Naive thymus-derived CD4-positive, alpha-beta T cell (primary cell): ENCODE measurements at regions of chr11 and their contacts with region 1.

Region 1: DNA sequence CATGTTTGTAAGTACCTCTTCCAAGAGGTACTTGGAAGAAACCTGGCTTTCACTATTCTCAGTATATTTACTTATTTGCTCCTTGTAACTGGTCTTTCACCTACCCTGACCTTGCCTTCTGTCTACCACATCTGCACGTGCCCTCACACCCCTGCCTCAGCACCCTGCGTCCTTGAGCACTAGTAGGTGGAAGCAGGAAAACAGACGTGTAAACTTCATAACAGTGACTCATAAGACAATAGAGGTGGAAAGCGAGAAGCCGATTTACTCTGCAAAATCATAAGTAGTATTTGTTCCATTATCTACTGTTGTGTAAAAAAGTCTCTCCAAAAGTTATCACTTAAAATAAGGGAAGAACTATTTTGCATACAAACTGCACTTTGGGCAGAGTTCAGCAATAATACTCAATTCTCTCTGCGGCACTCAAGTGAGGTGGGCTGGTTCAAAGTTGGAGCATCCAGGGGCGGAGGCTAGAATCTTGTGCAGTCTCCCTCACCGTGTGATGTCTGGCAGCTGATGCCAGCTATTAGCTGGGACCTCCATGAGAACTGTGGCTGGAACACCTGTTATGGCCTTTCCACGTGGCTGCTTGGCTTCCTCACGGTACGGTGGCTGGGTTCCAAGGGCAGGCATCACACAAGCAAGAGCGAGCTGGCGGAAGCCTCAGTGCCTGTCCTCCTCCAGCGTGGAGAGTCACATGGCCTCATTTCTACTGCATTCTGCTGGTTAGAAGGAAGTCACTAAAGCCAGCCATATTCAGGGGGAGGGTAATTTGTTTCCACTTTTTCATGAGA is 30.4 kb downstream of the PACS1 start:
- DNase-seq: peak; percentile 29 to 83 (median 80)
- ATAC-seq: peak; percentile 98
- H3K4me3 ChIP-seq: peak overlapping the region; percentile 55
- H3K4me3 Mint-ChIP-seq: peak overlapping the region; percentile 79 to 96 (median 86)
- H3K27ac ChIP-seq: peak overlapping the region; percentile 69
- H3K27ac Mint-ChIP-seq: peak overlapping the region; percentile 85 to 99 (median 94)
- H3K4me1 ChIP-seq: peaks cover 27 to 68% of the 10 kb centered on the region in 2 donors
- H3K4me1 Mint-ChIP-seq: peaks cover 50 to 88% (median 63%) of the 10 kb centered on the region in 7 donors
- H3K27me3 ChIP-seq: no peaks in the 10 kb centered on the region
- H3K27me3 Mint-ChIP-seq: no peaks in the 10 kb centered on the region

Region 2: DNA sequence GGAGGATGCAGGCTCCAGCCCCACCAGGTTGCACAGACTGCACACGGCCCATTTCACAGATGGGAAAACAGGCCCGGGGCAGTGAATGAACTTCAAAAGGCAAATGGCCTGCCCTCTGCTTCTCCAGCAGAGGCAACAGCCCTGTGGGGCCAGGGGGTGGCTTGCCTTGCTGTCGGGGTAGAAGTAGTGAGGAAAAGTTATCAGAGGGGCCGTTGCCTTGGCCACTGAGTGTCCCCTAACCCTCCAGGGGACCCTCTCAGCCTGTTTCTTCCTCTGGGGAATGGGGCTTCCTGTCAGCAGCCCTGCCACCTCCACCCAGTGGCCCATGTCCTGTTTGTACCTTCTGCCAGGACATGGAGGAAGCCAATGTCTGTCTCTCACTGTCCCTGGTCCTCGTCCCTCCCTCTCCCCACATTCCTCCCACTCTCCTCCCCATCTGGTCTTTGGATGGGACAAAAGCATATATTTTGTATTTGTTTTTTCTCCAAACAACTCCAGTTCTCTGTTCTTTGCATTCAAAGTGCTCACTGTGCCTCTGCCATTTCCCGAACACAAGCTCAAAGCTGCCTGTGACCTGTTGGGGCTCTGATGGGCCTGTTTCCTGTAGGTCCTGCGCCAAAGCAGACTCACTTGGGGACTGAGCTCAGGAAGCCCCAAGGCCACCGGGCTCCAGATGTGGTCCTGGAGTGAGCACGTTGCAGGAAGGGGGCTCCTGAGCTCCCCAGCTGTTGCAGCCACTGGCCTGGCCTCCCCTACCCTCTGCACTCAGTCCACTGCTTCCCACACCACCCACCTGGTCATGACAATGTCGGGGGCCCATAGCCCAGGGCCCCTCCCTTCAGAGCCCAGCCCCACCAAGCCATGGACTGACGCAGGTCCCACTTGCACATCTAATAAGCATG is 1306.9 kb before region 1 on chr11:
- CTCF ChIA-PET with region 1: no interaction called
- POLR2A ChIA-PET with region 1: no interaction called
- intact Hi-C with region 1: no loop called
- DNase-seq: no peak
- ATAC-seq: no peak
- H3K4me3 ChIP-seq: no peak overlapping the region
- H3K4me3 Mint-ChIP-seq: peak overlapping the region in 6 of 10 donors; percentile 12 to 53 (median 27)
- H3K27ac ChIP-seq: peak overlapping the region; percentile 43
- H3K27ac Mint-ChIP-seq: peak overlapping the region; percentile 42 to 92 (median 77)
- H3K4me1 ChIP-seq: peaks cover 0 to 9% of the 10 kb centered on the region in 2 donors
- H3K4me1 Mint-ChIP-seq: peaks cover 15 to 35% (median 26%) of the 10 kb centered on the region in 7 donors
- H3K27me3 ChIP-seq: no peaks in the 10 kb centered on the region
- H3K27me3 Mint-ChIP-seq: no peaks in the 10 kb centered on the region

Region 3: DNA sequence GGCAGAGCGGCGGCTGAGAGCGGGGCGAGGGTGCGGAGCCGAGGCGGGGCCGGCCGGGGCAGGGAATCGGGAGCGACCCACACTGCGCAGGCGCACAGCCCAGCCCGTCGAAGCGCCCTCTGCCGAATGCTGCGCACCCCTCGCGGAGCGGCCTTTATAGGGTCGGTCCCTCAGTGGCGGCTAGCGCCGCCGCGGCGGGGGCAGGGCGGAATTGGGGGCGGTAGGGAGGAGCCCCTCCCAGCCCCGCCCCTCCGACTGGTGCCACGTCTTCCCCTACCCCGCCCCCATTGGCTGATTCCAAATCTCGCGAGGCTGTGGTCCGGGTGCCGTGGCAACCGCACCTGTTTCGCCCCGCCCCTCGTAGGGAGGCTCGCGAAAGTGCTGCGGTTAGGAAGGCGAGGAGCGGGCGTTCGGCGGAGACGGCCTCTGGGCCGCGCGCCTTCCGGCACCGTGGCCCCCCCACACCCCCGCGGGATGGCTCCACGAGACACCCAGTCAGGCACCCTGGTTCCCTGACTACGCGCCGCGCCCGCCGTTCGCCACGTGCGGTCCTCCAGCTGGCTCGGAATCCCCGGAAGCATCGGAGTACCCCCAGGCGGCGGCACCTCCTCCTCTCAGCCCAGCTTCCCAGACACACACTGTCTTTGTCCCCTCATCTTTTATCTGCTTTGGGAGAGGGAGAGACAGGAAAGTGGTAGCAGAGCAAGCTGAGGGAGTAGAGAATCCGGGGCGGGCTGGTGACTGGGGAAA is 1221.8 kb before region 1 on chr11 and contains the start of gene EHD1:
- CTCF ChIA-PET with region 1: no interaction called
- POLR2A ChIA-PET with region 1: no interaction called
- intact Hi-C with region 1: no loop called
- DNase-seq: peak; percentile 98 to 99 (median 99)
- ATAC-seq: peak; percentile 91
- H3K4me3 ChIP-seq: peak within 1 kb of the TSS; percentile 100
- H3K4me3 Mint-ChIP-seq: peak within 1 kb of the TSS; percentile 95 to 99 (median 98)
- H3K27ac ChIP-seq: peak within 1 kb of the TSS; percentile 81
- H3K27ac Mint-ChIP-seq: peak within 1 kb of the TSS; percentile 88 to 98 (median 94)
- H3K4me1 ChIP-seq: peaks cover 39 to 45% of the 10 kb centered on the region in 2 donors
- H3K4me1 Mint-ChIP-seq: peaks cover 49 to 65% (median 60%) of the 10 kb centered on the region in 7 donors
- H3K27me3 ChIP-seq: no peaks in the 10 kb centered on the region
- H3K27me3 Mint-ChIP-seq: no peaks in the 10 kb centered on the region
- total RNA-seq, gene EHD1: 124 to 263 (median 208) TPM

Region 4: DNA sequence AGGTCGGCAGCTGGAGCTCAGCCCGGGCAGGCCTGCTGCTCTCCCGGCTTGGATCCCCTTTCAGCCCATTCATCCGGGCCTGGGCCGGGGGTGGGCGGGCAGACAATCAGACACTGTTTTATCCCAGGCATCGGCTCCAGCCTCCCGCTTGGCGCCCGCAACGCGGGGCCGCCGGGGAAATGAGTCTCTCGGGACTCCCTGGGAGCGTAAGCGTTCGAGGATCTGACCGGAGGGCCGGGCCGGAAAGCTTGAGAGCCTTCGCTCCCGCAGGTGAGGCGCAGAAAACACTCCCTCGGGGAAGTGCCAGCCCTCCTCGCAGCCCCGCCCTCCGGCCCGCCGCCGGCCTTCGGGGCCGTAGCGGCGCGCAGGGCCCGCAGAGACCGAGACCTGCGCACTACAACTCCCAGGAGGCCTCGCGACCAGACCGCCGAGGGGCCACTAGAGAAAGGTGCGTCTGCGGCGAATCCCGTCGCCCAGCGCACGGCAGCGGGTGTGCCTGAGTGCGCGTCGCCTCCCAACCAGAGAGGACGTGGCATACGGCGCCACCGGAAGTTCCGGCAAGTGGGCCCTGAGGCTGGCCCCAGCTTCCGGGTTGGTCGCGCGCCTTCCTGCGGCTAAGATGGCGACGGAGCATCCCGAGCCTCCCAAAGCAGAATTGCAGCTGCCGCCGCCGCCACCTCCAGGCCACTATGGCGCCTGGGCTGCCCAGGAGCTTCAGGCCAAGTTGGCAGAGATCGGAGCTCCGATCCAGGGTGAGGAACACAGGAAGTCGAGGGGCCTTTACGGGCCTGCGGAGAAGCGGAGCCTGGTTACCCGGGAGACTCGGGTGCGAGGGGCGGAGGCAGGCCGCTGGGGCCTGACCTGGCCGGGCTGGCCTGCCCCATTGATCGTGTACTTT is 48.5 kb before region 1 on chr11 and contains the start of gene SF3B2:
- CTCF ChIA-PET with region 1: interaction called, 4 read pairs
- POLR2A ChIA-PET with region 1: no interaction called
- intact Hi-C with region 1: loop called in 1 of 2 experiments (anchors 1 kb)
- DNase-seq: peak; percentile 81 to 94 (median 93)
- ATAC-seq: peak; percentile 99
- H3K4me3 ChIP-seq: peak within 1 kb of the TSS; percentile 88
- H3K4me3 Mint-ChIP-seq: peak within 1 kb of the TSS; percentile 95 to 100 (median 98)
- H3K27ac ChIP-seq: peak within 1 kb of the TSS; percentile 93
- H3K27ac Mint-ChIP-seq: peak within 1 kb of the TSS; percentile 95 to 99 (median 98)
- H3K4me1 ChIP-seq: peaks cover 14 to 18% of the 10 kb centered on the region in 2 donors
- H3K4me1 Mint-ChIP-seq: peaks cover 17 to 44% (median 38%) of the 10 kb centered on the region in 7 donors
- H3K27me3 ChIP-seq: no peaks in the 10 kb centered on the region
- H3K27me3 Mint-ChIP-seq: peaks cover 0 to 9% (median 0%) of the 10 kb centered on the region in 5 donors
- total RNA-seq, gene SF3B2: 163 to 248 (median 206) TPM

Region 5: DNA sequence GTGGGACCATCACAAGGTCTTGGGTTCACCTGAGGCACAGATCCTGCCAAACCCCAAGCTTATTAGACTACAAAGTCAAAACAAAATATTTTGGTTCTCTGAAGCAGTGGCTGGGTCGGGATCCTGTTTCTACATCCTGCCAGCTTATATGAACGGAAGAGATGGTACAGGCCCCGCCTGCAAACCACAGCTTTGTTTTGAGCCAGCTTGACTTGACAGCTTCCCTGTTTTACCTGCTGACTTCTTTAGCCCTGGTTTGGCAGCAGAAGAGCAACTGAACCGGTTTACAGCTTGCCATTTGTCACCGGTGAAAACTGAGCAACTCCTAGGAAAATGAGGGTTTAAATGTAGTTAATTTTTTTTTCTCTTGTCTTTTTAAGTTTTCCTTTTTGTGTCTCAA is 19.0 kb before region 1 on chr11:
- CTCF ChIA-PET with region 1: interaction called, 6 read pairs
- POLR2A ChIA-PET with region 1: interaction called, 78 read pairs
- intact Hi-C with region 1: loop called (anchors 1 kb)
- DNase-seq: peak; percentile 38 to 91 (median 86)
- ATAC-seq: peak; percentile 98
- H3K4me3 ChIP-seq: peak overlapping the region; percentile 38
- H3K4me3 Mint-ChIP-seq: peak overlapping the region; percentile 61 to 95 (median 89)
- H3K27ac ChIP-seq: peak overlapping the region; percentile 80
- H3K27ac Mint-ChIP-seq: peak overlapping the region; percentile 93 to 100 (median 98)
- H3K4me1 ChIP-seq: peaks cover 56 to 77% of the 10 kb centered on the region in 2 donors
- H3K4me1 Mint-ChIP-seq: peaks cover 62 to 98% (median 86%) of the 10 kb centered on the region in 7 donors
- H3K27me3 ChIP-seq: no peaks in the 10 kb centered on the region
- H3K27me3 Mint-ChIP-seq: no peaks in the 10 kb centered on the region

Region 6: DNA sequence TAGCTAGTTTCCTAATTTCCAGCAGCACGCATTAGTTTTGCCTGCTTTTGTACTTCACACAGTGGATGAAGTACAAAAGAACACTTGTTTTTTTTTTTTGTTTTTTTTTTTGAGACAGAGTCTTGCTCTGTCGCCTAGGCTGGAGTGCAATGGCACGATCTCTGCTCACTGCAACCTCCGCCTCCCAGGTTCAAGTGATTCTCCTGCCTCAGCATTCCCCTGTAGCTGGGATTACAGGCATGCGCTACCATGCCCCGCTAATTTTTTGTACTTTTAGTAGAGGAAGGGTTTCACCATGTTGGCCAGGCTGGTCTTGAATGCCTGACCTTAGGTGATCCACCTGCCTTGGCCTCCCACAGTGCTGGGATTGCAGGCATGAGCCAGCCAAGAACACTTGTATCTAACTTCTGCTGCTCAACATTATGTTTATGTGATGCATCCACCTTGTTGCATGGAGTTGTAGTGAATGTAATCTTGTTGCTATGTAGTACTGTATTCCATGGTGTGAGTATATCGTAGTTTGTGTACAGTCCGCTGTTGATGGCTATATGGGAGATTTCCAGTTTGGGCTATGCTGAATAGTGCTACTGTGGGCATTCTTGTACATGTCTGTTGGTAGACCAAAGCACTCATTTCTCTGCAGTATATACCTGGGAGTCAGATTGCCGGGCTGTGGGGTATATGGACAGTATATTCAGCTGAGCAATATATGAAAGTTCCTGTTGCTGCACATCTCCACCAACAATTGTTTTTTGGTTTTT is 13.1 kb before region 1 on chr11:
- CTCF ChIA-PET with region 1: interaction called, 4 read pairs
- POLR2A ChIA-PET with region 1: interaction called, 78 read pairs
- intact Hi-C with region 1: no loop called
- DNase-seq: no peak
- ATAC-seq: no peak
- H3K4me3 ChIP-seq: no peak overlapping the region
- H3K4me3 Mint-ChIP-seq: peak overlapping the region in 9 of 10 donors; percentile 37 to 78 (median 62)
- H3K27ac ChIP-seq: peak overlapping the region; percentile 32
- H3K27ac Mint-ChIP-seq: peak overlapping the region in 8 of 9 donors; percentile 75 to 97 (median 85)
- H3K4me1 ChIP-seq: peaks cover 30 to 71% of the 10 kb centered on the region in 2 donors
- H3K4me1 Mint-ChIP-seq: peaks cover 33 to 87% (median 69%) of the 10 kb centered on the region in 7 donors
- H3K27me3 ChIP-seq: no peaks in the 10 kb centered on the region
- H3K27me3 Mint-ChIP-seq: no peaks in the 10 kb centered on the region

Region 7: DNA sequence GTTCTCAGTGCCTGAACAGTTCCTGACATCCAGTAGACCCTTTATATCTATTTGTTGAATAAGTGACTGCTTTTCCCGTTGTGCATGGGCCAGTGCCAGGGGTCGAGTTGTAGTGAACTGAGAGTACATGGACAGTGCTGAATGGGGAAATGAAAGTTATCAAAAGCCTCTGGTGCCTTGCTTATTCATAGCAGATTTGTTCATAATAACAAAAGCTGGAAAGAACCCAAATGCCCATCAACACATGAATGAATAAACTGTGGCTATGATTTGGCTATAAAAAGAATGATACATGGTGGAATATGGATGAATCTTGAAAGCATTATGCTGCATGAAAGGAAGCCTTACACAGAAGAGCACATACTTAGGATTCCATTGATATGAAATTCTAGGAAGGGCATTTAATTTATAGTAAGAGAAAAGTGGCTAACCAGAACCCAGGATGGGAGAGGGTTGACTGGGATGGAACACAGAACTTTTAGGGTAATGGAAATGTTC is 12.2 kb after region 1 on chr11:
- CTCF ChIA-PET with region 1: interaction called, 5 read pairs
- POLR2A ChIA-PET with region 1: interaction called, 34 read pairs
- intact Hi-C with region 1: loop called (anchors 1 to 2 kb)
- DNase-seq: no peak
- ATAC-seq: peak; percentile 22
- H3K4me3 ChIP-seq: no peak overlapping the region
- H3K4me3 Mint-ChIP-seq: peak overlapping the region; percentile 42 to 81 (median 70)
- H3K27ac ChIP-seq: peak overlapping the region; percentile 55
- H3K27ac Mint-ChIP-seq: peak overlapping the region; percentile 80 to 95 (median 90)
- H3K4me1 ChIP-seq: peaks cover 76 to 89% of the 10 kb centered on the region in 2 donors
- H3K4me1 Mint-ChIP-seq: peaks cover 74 to 100% (median 90%) of the 10 kb centered on the region in 7 donors
- H3K27me3 ChIP-seq: no peaks in the 10 kb centered on the region
- H3K27me3 Mint-ChIP-seq: no peaks in the 10 kb centered on the region

Region 8: DNA sequence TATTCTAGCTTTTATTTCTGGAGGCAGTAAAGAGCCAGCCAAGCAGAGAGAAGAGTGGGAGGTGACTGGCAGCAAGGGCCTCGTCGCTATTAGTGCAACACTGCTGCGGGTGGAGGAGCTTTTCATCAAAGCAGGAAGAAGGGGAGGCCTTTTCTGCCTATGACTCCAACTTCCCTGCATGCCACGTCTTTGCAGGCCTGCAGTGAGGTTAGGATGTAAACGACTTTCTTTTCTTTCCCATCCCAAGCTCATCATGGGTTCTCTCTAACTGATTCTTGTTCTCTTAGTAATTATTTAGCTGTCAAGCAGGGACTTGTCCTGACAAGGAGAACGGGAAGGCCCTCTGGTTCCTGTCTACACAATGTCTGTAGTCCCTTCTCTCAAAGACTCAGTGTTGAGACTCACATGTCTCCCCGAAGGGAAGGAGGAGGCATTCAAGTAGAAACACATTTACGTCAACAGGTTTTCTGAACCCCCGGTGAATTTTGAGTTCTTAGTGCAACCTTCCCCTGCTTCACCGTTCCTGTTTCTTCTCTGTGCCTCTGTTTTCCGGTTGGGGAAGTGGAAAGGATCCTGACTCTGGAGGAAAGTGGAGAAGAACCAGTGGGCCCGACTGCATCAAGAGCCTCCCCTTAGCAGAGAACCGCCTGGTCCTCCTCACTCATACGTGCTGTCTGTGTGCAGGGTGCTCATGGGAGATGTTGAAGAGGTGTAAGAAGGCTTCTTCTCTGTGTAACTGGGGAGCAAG is 26.5 kb after region 1 on chr11:
- CTCF ChIA-PET with region 1: interaction called, 5 read pairs
- POLR2A ChIA-PET with region 1: interaction called, 14 read pairs
- intact Hi-C with region 1: no loop called
- DNase-seq: peak in 8 of 9 donors; percentile 45 to 74 (median 65)
- ATAC-seq: peak; percentile 95
- H3K4me3 ChIP-seq: peak overlapping the region; percentile 36
- H3K4me3 Mint-ChIP-seq: peak overlapping the region; percentile 60 to 88 (median 83)
- H3K27ac ChIP-seq: peak overlapping the region; percentile 74
- H3K27ac Mint-ChIP-seq: peak overlapping the region; percentile 82 to 100 (median 97)
- H3K4me1 ChIP-seq: peaks cover 20 to 65% of the 10 kb centered on the region in 2 donors
- H3K4me1 Mint-ChIP-seq: peaks cover 53 to 89% (median 84%) of the 10 kb centered on the region in 7 donors
- H3K27me3 ChIP-seq: no peaks in the 10 kb centered on the region
- H3K27me3 Mint-ChIP-seq: no peaks in the 10 kb centered on the region

Region 9: GRCh38 chr11:66136752-66137123 is 36.3 kb after region 1 on chr11:
- CTCF ChIA-PET with region 1: interaction called, 6 read pairs
- POLR2A ChIA-PET with region 1: interaction called, 3 read pairs
- intact Hi-C with region 1: loop called in 1 of 2 experiments (anchors 2 kb)
- DNase-seq: no peak
- ATAC-seq: no peak
- H3K4me3 ChIP-seq: no peak overlapping the region
- H3K4me3 Mint-ChIP-seq: no peak overlapping the region
- H3K27ac ChIP-seq: no peak overlapping the region
- H3K27ac Mint-ChIP-seq: peak overlapping the region in 5 of 9 donors; percentile 6 to 75 (median 23)
- H3K4me1 ChIP-seq: peaks cover 0 to 4% of the 10 kb centered on the region in 2 donors
- H3K4me1 Mint-ChIP-seq: peaks cover 24 to 76% (median 65%) of the 10 kb centered on the region in 7 donors
- H3K27me3 ChIP-seq: no peaks in the 10 kb centered on the region
- H3K27me3 Mint-ChIP-seq: no peaks in the 10 kb centered on the region